ENCODE measurements at regions of chr5 and their contacts with region 1.

Region 1: DNA sequence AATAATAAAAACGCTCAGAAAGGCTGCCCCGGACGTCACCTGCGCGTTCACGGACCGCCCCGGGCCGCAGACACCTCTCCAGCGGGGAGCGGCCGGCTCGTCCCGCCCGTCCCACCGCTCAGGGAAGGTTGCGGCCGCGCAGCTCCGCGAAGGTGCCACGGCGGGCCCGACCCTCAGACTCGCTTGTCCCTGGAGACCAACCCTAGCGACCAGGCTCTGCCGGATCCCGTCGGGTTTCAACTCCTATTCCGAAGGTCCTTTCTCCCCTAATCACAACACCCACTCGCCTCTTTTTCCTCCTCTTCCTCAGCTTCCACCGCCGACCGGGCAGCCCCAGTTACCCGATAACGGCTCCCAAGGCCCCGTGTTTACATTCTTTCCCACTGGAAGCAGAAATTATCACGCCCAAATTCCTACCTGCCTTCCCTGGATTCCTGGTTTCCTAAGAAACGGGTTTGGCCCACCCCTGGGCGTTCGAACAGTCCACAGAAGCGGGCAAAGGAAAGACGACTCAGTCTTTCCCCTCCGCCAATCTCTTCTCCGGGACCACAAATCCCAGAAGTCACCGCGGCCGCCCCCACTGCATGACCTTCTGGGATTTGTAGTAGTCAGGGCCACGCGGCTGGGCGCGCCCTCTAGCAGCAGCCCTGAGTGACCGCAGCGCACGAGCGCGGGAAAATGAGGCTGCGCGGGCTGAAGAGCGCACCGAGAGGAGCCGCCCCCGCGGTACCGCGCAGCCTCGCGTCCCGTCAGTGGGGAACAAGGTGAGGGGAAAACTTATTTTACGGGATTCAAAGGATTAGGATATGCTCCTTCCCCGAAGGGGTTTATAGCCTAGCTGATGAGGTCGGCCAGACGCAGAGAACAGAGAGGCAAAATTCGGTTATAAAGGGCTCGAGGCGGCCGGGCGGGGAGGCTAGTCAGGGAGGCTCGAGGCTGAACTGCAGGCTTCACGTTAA is at the start of gene TTC33:
- DNase-seq: peak; percentile 61
- ATAC-seq: peak; percentile 95
- H3K4me3 ChIP-seq: peak within 1 kb of the TSS; percentile 88
- H3K27ac ChIP-seq: peak within 1 kb of the TSS; percentile 74
- H3K4me1 ChIP-seq: peaks cover 7% of the 10 kb centered on the region; the same call in 1 of the 2 replicates
- H3K27me3 ChIP-seq: no peaks in the 10 kb centered on the region
- CTCF ChIP-seq: peak; percentile 61 to 87 (median 69)
- EP300 ChIP-seq: no peak
- POLR2A ChIP-seq: no peak; the same call in none of the 2 replicates
- RAD21 ChIP-seq: peak; percentile 21; the same call in 1 of the 2 replicates
- polyA plus RNA-seq, gene TTC33: 13.4 to 20.3 TPM

Region 2: DNA sequence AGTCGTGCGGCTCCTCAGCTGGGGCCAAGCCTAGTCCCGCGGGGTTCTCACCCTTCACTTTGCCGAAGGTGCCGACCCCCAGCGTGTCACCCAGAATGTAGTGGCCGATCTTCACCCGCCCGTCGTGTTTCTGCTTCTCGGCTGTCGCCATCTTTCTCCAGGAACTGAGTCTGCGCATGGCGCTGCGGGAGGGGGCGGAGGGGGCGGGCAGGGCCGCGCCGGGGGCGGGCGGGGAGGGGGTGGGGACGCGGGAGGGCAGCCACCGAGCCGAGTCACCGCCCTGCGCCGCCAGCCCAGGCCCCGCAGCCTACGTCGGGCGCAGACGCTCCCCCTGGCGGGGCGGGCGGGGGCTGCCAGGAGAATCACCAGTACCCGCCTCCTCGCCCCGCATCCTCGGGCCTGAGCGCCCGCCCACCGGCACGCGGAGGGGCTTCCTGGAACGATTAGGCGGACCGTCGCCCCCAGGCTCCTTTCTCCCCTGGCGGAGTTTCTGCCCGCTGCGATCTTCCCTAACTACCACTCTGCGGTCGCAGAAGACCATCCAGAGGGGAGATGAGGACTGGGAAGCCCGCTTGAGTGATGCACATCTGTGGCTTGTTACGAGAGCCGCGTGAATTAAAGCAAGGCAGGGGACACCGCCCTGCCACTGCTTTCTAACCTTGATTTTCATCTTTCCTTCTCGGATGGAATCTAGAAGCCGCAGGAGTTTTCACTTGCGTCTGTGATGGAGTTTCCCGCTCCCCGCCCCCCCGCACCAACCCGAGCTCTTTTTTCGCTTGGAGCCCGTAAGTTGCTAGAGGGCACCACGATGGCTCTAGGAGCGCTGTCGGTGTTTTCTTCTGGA is 42.5 kb after region 1 on chr5 and contains the start of gene PRKAA1:
- CTCF ChIA-PET with region 1: interaction called, 3 read pairs
- POLR2A ChIA-PET with region 1: no interaction called
- RAD21 ChIA-PET with region 1: no interaction called
- SMC1A ChIA-PET with region 1: no interaction called
- in situ Hi-C with region 1: no loop called
- intact Hi-C with region 1: loop called (anchors 1 kb)
- DNase-seq: peak; percentile 20
- ATAC-seq: peak; percentile 95
- H3K4me3 ChIP-seq: peak within 1 kb of the TSS; percentile 84
- H3K27ac ChIP-seq: no peak within 1 kb of the TSS; the same call in none of the 2 replicates
- H3K4me1 ChIP-seq: no peaks in the 10 kb centered on the region
- H3K27me3 ChIP-seq: peaks cover 0 to 1% of the 10 kb centered on the region in 2 experiments; a peak in 1 of 4 replicates
- CTCF ChIP-seq: peak; percentile 39 to 74 (median 64); a peak in 5 of 6 replicates
- EP300 ChIP-seq: no peak
- POLR2A ChIP-seq: peak; percentile 88
- RAD21 ChIP-seq: no peak
- polyA plus RNA-seq, gene PRKAA1: 13.6 to 13.8 TPM

Region 3: DNA sequence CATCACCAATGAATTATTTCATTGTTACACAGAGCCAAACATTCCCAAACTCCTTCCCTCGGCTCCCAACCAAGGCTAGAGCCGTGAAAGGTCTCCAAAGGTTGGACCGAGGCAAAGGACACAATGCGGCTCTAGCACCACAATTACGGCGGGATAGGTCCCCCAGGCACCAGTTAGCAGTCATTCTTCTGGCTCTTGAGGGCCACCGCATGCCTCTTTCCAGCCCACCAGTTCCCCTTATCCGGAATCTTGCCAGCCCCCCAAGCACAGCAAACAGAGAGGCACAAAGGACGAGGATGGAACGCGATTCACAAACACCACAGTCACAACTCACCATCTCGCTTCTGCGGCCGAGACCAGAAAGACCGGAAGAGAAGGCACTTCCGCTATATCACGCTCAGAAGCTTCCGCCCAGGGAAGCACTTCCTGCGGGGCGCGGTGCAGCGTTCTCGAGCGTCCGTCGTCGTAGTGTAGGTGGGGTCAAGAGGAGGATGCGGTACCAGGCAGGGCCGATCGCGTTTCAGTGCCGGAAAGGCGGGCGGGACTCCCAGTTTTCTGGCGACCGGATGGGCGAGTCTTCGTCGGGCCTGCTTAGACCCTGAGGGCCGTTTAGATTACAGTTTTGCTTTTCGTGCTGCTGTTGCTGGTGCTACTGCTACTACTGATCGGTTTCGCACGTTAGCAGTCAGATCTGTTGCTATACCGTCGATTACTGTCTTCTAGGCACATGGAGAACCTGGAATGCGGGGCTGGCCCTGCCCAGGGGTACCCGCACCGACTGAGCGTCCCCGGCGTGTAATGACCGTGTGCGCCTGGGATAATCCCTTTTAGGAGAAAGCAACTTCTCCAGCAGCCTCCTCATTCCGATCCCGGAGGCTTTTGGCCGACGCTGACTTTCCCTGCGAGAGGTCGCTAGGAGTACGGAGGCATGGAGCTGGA is 79.4 kb after region 1 on chr5 and contains the start of gene RPL37:
- CTCF ChIA-PET with region 1: interaction called, 4 read pairs
- POLR2A ChIA-PET with region 1: no interaction called
- RAD21 ChIA-PET with region 1: no interaction called
- SMC1A ChIA-PET with region 1: interaction called, 3 read pairs
- in situ Hi-C with region 1: loop called (anchors 5 kb)
- intact Hi-C with region 1: loop called (anchors 1 kb)
- DNase-seq: peak; percentile 87
- ATAC-seq: peak; percentile 92
- H3K4me3 ChIP-seq: peak within 1 kb of the TSS; percentile 92
- H3K27ac ChIP-seq: peak within 1 kb of the TSS; percentile 97
- H3K4me1 ChIP-seq: peaks cover 11% of the 10 kb centered on the region
- H3K27me3 ChIP-seq: no peaks in the 10 kb centered on the region
- CTCF ChIP-seq: no peak
- EP300 ChIP-seq: no peak
- POLR2A ChIP-seq: peak; percentile 99
- RAD21 ChIP-seq: no peak
- polyA plus RNA-seq, gene RPL37: 2,699 to 2,779 TPM